HepG2 (cell line): ENCODE measurements at regions of chr12 and their contacts with region 1.

Region 1: GRCh38 chr12:21438643-21439042 is 1.2 kb downstream of the PYROXD1 start:
- DNase-seq: no peak
- ATAC-seq: no peak
- H3K4me3 ChIP-seq: peak overlapping the region; percentile 78 to 80 (median 79)
- H3K27ac ChIP-seq: no peak overlapping the region
- H3K4me1 ChIP-seq: peaks cover 19% of the 10 kb centered on the region
- H3K27me3 ChIP-seq: peaks cover 1 to 11% of the 10 kb centered on the region in 2 experiments; a peak in 2 of 5 replicates
- CTCF ChIP-seq: no peak
- EP300 ChIP-seq: no peak
- POLR2A ChIP-seq: no peak
- RAD21 ChIP-seq: no peak

Region 2: DNA sequence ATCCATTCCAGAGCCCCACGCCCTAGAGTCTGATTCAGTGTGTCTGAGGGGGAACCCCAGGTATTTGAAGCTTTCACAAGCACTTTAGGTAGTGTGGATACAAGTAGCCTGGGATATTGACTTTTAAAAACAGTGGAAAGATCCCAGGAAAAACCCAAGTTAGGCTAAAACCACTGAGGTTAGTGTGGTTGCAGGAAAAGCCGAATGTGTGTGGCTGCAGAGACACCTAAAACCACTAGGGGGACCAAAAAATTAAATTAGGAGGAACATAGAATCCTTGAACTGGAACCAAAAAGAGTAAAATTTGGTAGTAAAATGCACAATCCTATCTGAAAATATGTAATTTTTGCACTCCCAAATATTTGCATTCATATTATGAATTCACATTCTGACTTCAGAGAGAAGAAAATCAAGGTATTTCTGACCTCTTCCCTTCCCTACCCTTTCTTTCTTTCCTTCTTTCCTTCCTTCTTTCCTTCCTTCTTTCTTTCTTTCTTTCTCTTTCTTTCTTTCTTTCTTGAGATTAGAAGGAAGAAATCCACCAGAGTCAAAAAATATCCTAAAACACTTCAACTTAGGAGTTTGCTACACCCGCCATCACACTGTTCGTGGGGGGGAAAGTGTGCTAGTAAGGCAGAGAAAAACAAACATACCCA is 141.8 kb before region 1 on chr12:
- CTCF ChIA-PET with region 1: interaction called, 3 read pairs
- POLR2A ChIA-PET with region 1: no interaction called
- in situ Hi-C with region 1: no loop called
- intact Hi-C with region 1: loop called (anchors 5 kb)
- DNase-seq: no peak
- ATAC-seq: peak; percentile 72
- H3K4me3 ChIP-seq: no peak overlapping the region
- H3K27ac ChIP-seq: no peak overlapping the region
- H3K4me1 ChIP-seq: no peaks in the 10 kb centered on the region
- H3K27me3 ChIP-seq: no peaks in the 10 kb centered on the region
- CTCF ChIP-seq: peak; percentile 39; the same call in 1 of the 2 replicates
- EP300 ChIP-seq: no peak
- POLR2A ChIP-seq: no peak
- RAD21 ChIP-seq: no peak

Region 3: DNA sequence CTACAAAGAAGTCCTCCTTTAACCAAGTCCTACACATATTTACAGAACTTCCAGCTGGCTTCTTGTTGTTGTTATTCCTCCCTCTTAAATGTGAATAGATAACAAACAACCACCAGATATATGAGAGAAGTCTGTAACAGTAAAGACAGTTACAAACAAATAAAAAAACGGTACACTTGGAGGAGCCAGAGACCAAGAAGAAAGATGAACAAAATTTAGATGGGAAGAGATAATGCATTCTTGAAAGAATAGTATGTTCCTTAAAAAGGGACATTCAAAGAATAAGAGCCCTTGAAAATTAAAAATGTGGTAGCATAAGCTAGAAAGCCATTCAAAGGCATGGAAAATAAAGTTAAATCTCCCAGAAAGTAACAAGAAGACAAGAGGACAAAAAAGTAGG is 129.9 kb before region 1 on chr12:
- CTCF ChIA-PET with region 1: no interaction called
- POLR2A ChIA-PET with region 1: no interaction called
- in situ Hi-C with region 1: loop called (anchors 10 kb)
- intact Hi-C with region 1: loop called (anchors 2 kb)
- DNase-seq: no peak
- ATAC-seq: no peak
- H3K4me3 ChIP-seq: no peak overlapping the region
- H3K27ac ChIP-seq: no peak overlapping the region
- H3K4me1 ChIP-seq: no peaks in the 10 kb centered on the region
- H3K27me3 ChIP-seq: no peaks in the 10 kb centered on the region
- CTCF ChIP-seq: no peak
- EP300 ChIP-seq: no peak
- POLR2A ChIP-seq: no peak
- RAD21 ChIP-seq: no peak

Region 4: DNA sequence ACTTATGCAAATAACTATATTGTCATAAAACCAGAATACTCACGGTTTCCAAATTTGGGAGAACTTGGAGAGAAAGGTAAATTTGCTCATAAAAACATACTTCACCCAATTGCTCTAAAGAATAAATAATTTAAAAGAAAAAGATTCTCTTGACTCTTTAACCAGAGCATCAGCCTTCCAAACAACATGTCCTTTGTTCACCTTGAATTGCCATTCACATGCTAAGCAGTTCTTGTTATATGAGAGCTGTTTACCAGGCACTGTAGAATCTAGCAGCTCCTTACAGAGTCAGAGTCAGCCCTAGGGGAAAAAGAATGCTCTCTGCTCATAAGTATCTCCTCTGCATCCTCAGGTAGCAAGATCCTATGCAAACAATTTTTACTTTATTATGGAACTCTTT is 114.1 kb before region 1 on chr12:
- CTCF ChIA-PET with region 1: no interaction called
- POLR2A ChIA-PET with region 1: no interaction called
- in situ Hi-C with region 1: loop called (anchors 10 kb)
- intact Hi-C with region 1: no loop called
- DNase-seq: no peak
- ATAC-seq: no peak
- H3K4me3 ChIP-seq: no peak overlapping the region
- H3K27ac ChIP-seq: no peak overlapping the region
- H3K4me1 ChIP-seq: no peaks in the 10 kb centered on the region
- H3K27me3 ChIP-seq: no peaks in the 10 kb centered on the region
- CTCF ChIP-seq: no peak
- EP300 ChIP-seq: no peak
- POLR2A ChIP-seq: no peak
- RAD21 ChIP-seq: no peak

Region 5: DNA sequence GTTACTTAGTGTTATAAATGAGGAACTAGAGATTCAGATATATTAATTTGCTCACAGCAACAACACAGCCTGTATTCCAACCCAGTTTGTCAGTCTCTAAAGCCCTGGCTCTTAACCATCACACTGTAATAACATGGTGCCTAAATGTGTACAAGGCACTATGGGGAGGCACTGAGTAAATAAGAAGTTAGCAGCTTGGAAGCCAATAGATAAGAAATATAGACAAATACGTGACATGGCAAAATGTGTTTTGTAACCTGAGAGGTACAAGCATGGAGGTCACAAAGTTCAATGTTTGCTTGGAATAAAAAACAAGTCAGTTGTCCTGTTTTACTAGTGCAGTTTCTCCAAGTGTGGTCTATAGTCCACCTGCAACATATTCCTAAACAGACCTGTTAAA is 87.7 kb before region 1 on chr12:
- CTCF ChIA-PET with region 1: no interaction called
- POLR2A ChIA-PET with region 1: no interaction called
- in situ Hi-C with region 1: no loop called
- intact Hi-C with region 1: loop called (anchors 1 kb)
- DNase-seq: peak; percentile 75
- ATAC-seq: peak; percentile 100
- H3K4me3 ChIP-seq: no peak overlapping the region
- H3K27ac ChIP-seq: no peak overlapping the region
- H3K4me1 ChIP-seq: peaks cover 12% of the 10 kb centered on the region
- H3K27me3 ChIP-seq: peaks cover 0 to 7% of the 10 kb centered on the region in 2 experiments; a peak in 1 of 5 replicates
- CTCF ChIP-seq: no peak
- EP300 ChIP-seq: peak in 1 of 2 experiments; percentile 70; a peak in 2 of 4 replicates
- POLR2A ChIP-seq: no peak
- RAD21 ChIP-seq: no peak

Region 6: GRCh38 chr12:21613931-21614330 is 175.3 kb after region 1 on chr12:
- CTCF ChIA-PET with region 1: no interaction called
- POLR2A ChIA-PET with region 1: no interaction called
- in situ Hi-C with region 1: no loop called
- intact Hi-C with region 1: no loop called
- DNase-seq: no peak
- ATAC-seq: 0 out of 3 replicates have a peak, but pooled peaks have one; percentile 40
- H3K4me3 ChIP-seq: no peak overlapping the region
- H3K27ac ChIP-seq: no peak overlapping the region
- H3K4me1 ChIP-seq: no peaks in the 10 kb centered on the region
- H3K27me3 ChIP-seq: no peaks in the 10 kb centered on the region
- CTCF ChIP-seq: no peak
- EP300 ChIP-seq: no peak
- POLR2A ChIP-seq: no peak
- RAD21 ChIP-seq: no peak

Region 7: GRCh38 chr12:21925296-21925913 is 486.8 kb after region 1 on chr12:
- CTCF ChIA-PET with region 1: no interaction called
- POLR2A ChIA-PET with region 1: no interaction called
- in situ Hi-C with region 1: no loop called
- intact Hi-C with region 1: no loop called
- DNase-seq: no peak
- ATAC-seq: no peak
- H3K4me3 ChIP-seq: no peak overlapping the region
- H3K27ac ChIP-seq: no peak overlapping the region
- H3K4me1 ChIP-seq: no peaks in the 10 kb centered on the region
- H3K27me3 ChIP-seq: no peaks in the 10 kb centered on the region
- CTCF ChIP-seq: no peak
- EP300 ChIP-seq: no peak
- POLR2A ChIP-seq: no peak
- RAD21 ChIP-seq: no peak